ENCODE measurements at regions of chr2 and their contacts with region 1.

Region 1: GRCh38 chr2:30686000-30686399 is 121.2 kb downstream of the CAPN13 start:
- DNase-seq: no peak
- ATAC-seq: no peak

Region 2: GRCh38 chr2:30455114-30455738 is 230.8 kb before region 1 on chr2:
- intact Hi-C with region 1: loop called (anchors 5 kb)
- DNase-seq: no peak
- ATAC-seq: no peak

Region 3: DNA sequence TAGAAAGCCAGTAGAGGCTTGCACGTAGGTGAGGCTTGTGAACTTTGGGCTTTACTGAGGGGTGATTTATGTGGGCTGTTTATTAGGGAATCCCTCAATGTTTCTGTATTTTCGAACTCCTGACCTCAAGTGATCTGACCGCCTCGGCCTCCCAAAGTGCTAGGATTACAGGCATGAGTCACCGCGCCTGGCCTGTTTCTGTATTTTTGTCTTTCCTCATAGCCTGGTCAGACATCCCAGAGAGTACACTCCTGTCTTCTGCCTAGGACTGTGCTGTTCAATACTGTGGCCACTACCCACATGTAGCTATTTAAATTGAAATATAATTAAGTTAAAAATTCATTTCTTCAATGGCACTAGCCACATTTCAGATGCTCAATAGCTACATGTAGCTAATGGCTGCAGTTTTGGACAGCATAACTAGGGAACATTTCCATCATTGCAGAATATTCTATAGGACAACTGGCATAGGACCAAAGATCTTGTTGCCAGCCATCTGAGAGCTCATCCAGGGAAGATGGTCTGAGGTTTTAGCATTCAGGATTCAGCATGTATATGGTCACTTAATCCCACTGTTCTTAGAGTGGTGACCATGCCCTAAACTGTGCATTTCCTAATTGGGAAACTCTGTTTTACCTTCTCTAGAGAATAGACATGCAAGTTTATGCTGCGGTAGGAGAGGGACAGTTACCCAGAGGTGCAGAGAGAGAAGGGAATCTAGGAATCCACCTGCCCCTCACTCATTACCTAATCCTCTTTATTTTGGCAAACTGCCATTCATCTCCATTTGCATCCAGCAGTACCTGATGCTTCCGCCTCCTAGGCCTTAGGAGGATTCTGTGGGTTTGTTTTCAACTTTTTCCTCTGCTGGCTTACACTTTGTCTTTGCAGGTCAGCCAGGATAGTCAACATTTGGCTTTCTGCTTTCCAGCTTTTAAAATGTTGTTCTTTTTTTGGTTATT is 174.6 kb before region 1 on chr2:
- intact Hi-C with region 1: loop called (anchors 2 kb)
- DNase-seq: no peak
- ATAC-seq: peak; percentile 74

Region 4: GRCh38 chr2:30629866-30630265 is 56.1 kb before region 1 on chr2:
- intact Hi-C with region 1: loop called (anchors 5 kb)
- DNase-seq: no peak
- ATAC-seq: no peak